ENCODE measurements at regions of chr14 and their contacts with region 1.

Region 1: DNA sequence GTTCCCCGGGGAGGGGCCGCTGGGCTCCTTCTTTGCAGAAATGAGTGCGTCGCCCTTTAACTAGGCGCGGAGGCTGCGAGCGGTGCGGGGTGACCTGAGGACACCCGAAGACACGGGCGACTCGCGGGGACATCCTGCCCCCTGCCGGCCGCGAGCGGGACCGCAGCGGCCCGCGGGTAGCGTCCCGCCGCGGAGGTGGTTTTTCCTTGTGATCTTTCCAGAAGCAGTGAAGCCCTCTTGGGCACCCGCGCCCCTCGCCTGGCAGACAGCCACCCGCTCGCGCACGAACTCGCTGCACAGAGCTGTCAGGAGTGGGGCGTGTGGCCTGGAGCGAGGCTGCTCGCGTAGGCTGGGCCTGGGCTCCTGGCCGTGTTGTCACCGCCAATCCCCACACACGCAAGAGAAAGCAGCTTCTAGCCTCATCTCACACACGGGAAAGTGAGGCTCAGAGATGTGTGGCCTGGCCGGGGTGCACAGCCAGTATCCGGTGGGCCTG is 67.2 kb downstream of the DIO3 start:
- DNase-seq: peak; percentile 67
- H3K4me3 ChIP-seq: peak overlapping the region in 2 of 3 experiments; percentile 27 to 37
- H3K27ac ChIP-seq: no peak overlapping the region
- H3K4me1 ChIP-seq: peaks cover 8% of the 10 kb centered on the region
- H3K27me3 ChIP-seq: no peaks in the 10 kb centered on the region
- CTCF ChIP-seq: peak; percentile 66 to 89

Region 2: GRCh38 chr14:100383727-100384158 is 1244.8 kb before region 1 on chr14:
- CTCF ChIA-PET with region 1: no interaction called
- dilution Hi-C with region 1: no loop called
- in situ Hi-C with region 1: no loop called
- intact Hi-C with region 1: loop called (anchors 1 kb)
- DNase-seq: peak; percentile 35
- H3K4me3 ChIP-seq: no peak overlapping the region
- H3K27ac ChIP-seq: no peak overlapping the region
- H3K4me1 ChIP-seq: peaks cover 17% of the 10 kb centered on the region
- H3K27me3 ChIP-seq: no peaks in the 10 kb centered on the region
- CTCF ChIP-seq: peak; percentile 88 to 91

Region 3: GRCh38 chr14:100440187-100440631 is 1188.3 kb before region 1 on chr14:
- CTCF ChIA-PET with region 1: no interaction called
- dilution Hi-C with region 1: no loop called
- in situ Hi-C with region 1: no loop called
- intact Hi-C with region 1: loop called (anchors 1 kb)
- DNase-seq: peak; percentile 79
- H3K4me3 ChIP-seq: no peak overlapping the region
- H3K27ac ChIP-seq: peak overlapping the region; percentile 75
- H3K4me1 ChIP-seq: peaks cover 30% of the 10 kb centered on the region
- H3K27me3 ChIP-seq: no peaks in the 10 kb centered on the region
- CTCF ChIP-seq: peak; percentile 82 to 95

Region 4: GRCh38 chr14:100645192-100645990 is 983.1 kb before region 1 on chr14:
- CTCF ChIA-PET with region 1: no interaction called
- dilution Hi-C with region 1: no loop called
- in situ Hi-C with region 1: loop called in 1 of 2 experiments (anchors 25 kb)
- intact Hi-C with region 1: loop called (anchors 5 kb)
- DNase-seq: peak; percentile 70
- H3K4me3 ChIP-seq: no peak overlapping the region
- H3K27ac ChIP-seq: no peak overlapping the region
- H3K4me1 ChIP-seq: peaks cover 4% of the 10 kb centered on the region
- H3K27me3 ChIP-seq: no peaks in the 10 kb centered on the region
- CTCF ChIP-seq: peak; percentile 74 to 83

Region 5: GRCh38 chr14:100662879-100663760 is 965.4 kb before region 1 on chr14:
- CTCF ChIA-PET with region 1: no interaction called
- dilution Hi-C with region 1: loop called (anchors 5 kb)
- in situ Hi-C with region 1: loop called (anchors 10 to 25 kb)
- intact Hi-C with region 1: loop called (anchors 1 kb)
- DNase-seq: peak; percentile 20
- H3K4me3 ChIP-seq: no peak overlapping the region
- H3K27ac ChIP-seq: no peak overlapping the region
- H3K4me1 ChIP-seq: no peaks in the 10 kb centered on the region
- H3K27me3 ChIP-seq: no peaks in the 10 kb centered on the region
- CTCF ChIP-seq: peak; percentile 86 to 89

Region 6: GRCh38 chr14:100828031-100828769 is 800.3 kb before region 1 on chr14:
- CTCF ChIA-PET with region 1: no interaction called
- dilution Hi-C with region 1: no loop called
- in situ Hi-C with region 1: loop called in 1 of 2 experiments (anchors 25 kb)
- intact Hi-C with region 1: no loop called
- DNase-seq: peak; percentile 20
- H3K4me3 ChIP-seq: peak overlapping the region; percentile 32 to 40 (median 32)
- H3K27ac ChIP-seq: no peak overlapping the region
- H3K4me1 ChIP-seq: no peaks in the 10 kb centered on the region
- H3K27me3 ChIP-seq: peaks cover 6% of the 10 kb centered on the region
- CTCF ChIP-seq: peak; percentile 46 to 69

Region 7: GRCh38 chr14:100906420-100906819 is 722.1 kb before region 1 on chr14:
- CTCF ChIA-PET with region 1: no interaction called
- dilution Hi-C with region 1: no loop called
- in situ Hi-C with region 1: no loop called
- intact Hi-C with region 1: loop called (anchors 1 kb)
- DNase-seq: no peak
- H3K4me3 ChIP-seq: no peak overlapping the region
- H3K27ac ChIP-seq: no peak overlapping the region
- H3K4me1 ChIP-seq: peaks cover 3% of the 10 kb centered on the region
- H3K27me3 ChIP-seq: peaks cover 2% of the 10 kb centered on the region
- CTCF ChIP-seq: no peak

Region 8: GRCh38 chr14:101654051-101654450 is 25.5 kb after region 1 on chr14:
- CTCF ChIA-PET with region 1: no interaction called
- dilution Hi-C with region 1: no loop called
- in situ Hi-C with region 1: no loop called
- intact Hi-C with region 1: no loop called
- DNase-seq: peak; percentile 20
- H3K4me3 ChIP-seq: no peak overlapping the region
- H3K27ac ChIP-seq: no peak overlapping the region
- H3K4me1 ChIP-seq: no peaks in the 10 kb centered on the region
- H3K27me3 ChIP-seq: no peaks in the 10 kb centered on the region
- CTCF ChIP-seq: no peak